ENCODE measurements at regions of chr16 and their contacts with region 1.

Region 1: DNA sequence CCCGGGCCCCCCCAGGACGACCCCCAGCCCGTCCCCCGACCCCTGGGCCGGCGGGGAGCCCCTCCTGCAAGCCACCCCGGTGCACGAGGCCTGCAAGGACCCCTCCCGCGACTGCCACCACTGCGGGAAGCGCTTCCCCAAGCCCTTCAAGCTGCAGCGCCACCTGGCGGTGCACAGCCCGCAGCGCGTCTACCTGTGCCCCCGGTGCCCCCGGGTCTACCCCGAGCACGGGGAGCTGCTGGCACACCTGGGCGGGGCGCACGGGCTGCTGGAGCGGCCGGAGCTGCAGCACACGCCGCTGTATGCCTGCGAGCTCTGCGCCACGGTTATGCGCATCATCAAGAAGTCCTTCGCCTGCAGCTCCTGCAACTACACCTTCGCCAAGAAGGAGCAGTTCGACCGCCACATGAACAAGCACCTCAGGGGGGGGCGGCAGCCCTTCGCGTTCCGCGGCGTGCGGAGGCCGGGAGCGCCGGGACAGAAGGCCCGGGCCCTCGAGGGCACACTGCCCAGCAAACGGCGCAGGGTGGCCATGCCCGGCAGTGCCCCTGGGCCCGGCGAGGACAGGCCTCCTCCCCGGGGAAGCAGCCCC is 15.6 kb upstream of the ZFPM1 start:
- DNase-seq: no peak
- H3K4me3 ChIP-seq: no peak overlapping the region
- H3K27ac ChIP-seq: no peak overlapping the region
- H3K4me1 ChIP-seq: peaks cover 3 to 8% (median 6%) of the 10 kb centered on the region in 4 donors
- H3K27me3 ChIP-seq: peaks cover 0 to 56% (median 0%) of the 10 kb centered on the region in 4 donors
- CTCF ChIP-seq: peak in 2 of 3 experiments; percentile 85 to 91
- EP300 ChIP-seq: no peak
- POLR2A ChIP-seq: no peak

Region 2: DNA sequence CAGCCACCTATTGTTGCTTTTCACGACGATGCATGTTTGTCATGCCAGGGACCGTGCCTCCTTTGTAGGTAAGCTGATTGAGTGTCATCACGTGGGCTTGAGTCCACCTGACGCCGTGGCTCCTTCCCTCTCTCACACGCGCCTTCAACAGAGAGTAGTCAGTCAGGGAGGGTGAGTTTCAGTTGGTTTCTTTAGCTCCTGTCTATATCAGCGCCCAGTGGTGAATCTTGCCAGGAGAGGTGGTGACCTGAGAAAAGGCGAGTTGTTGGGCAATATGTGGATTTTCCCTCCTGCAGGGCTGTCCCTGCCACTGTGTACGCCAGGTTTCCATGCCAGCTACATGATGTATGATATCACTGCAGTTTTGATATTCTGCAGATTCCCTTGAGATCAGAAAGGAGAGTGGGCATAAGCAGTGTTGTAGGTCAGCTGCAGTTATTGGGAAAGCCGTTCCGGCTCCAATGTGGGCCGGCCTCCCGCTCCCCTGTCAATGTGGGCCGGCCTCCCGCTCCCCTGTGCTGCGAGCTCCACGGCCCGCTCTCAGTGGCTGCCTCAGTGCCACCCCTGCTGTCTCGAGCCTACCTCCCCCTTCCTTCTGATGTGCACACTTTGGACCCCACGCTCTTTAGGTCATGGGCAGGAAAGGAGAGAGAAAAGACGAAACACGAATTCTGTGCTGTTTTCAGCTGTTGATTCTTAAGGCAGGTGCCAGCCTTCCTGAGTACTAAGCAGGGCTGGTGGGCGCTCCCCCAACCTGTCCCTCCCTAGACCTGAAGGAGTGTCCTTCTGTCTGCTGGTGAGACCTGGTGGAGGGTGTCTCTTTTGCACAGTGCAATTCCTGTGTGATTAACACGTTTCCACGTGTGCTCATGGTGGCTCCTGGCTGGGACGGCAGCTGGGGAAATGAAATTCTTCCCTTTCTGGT is 454.7 kb before region 1 on chr16:
- intact Hi-C with region 1: loop called (anchors 10 kb)
- DNase-seq: no peak
- H3K4me3 ChIP-seq: no peak overlapping the region
- H3K27ac ChIP-seq: no peak overlapping the region
- H3K4me1 ChIP-seq: peaks cover 0 to 5% (median 2%) of the 10 kb centered on the region in 4 donors
- H3K27me3 ChIP-seq: no peaks in the 10 kb centered on the region
- CTCF ChIP-seq: no peak
- EP300 ChIP-seq: no peak
- POLR2A ChIP-seq: no peak

Region 3: GRCh38 chr16:88194397-88195268 is 242.8 kb before region 1 on chr16:
- intact Hi-C with region 1: loop called (anchors 5 kb)
- DNase-seq: peak; percentile 90
- H3K4me3 ChIP-seq: no peak overlapping the region
- H3K27ac ChIP-seq: no peak overlapping the region
- H3K4me1 ChIP-seq: no peaks in the 10 kb centered on the region
- H3K27me3 ChIP-seq: no peaks in the 10 kb centered on the region
- CTCF ChIP-seq: no peak
- EP300 ChIP-seq: no peak
- POLR2A ChIP-seq: no peak